ENCODE measurements at regions of chr1 and their contacts with region 1.

Region 1: GRCh38 chr1:11907275-11908094 is 18.7 kb downstream of the KIAA2013 start:
- DNase-seq: peak; percentile 95
- ATAC-seq: peak; percentile 57
- H3K4me3 Mint-ChIP-seq: peak overlapping the region; percentile 81
- H3K27ac Mint-ChIP-seq: peak overlapping the region; percentile 99
- H3K4me1 Mint-ChIP-seq: peaks cover 37% of the 10 kb centered on the region
- H3K27me3 Mint-ChIP-seq: peaks cover 12% of the 10 kb centered on the region

Region 2: GRCh38 chr1:11059990-11060830 is 847.3 kb before region 1 on chr1 and contains the start of gene SRM:
- CTCF ChIA-PET with region 1: no interaction called
- POLR2A ChIA-PET with region 1: no interaction called
- intact Hi-C with region 1: loop called in 1 of 2 experiments (anchors 5 kb)
- DNase-seq: peak; percentile 95
- ATAC-seq: peak; percentile 98
- H3K4me3 Mint-ChIP-seq: peak within 1 kb of the TSS; percentile 93
- H3K27ac Mint-ChIP-seq: peak within 1 kb of the TSS; percentile 94
- H3K4me1 Mint-ChIP-seq: peaks cover 41% of the 10 kb centered on the region
- H3K27me3 Mint-ChIP-seq: no peaks in the 10 kb centered on the region
- total RNA-seq, gene SRM: 180 to 242 TPM

Region 3: DNA sequence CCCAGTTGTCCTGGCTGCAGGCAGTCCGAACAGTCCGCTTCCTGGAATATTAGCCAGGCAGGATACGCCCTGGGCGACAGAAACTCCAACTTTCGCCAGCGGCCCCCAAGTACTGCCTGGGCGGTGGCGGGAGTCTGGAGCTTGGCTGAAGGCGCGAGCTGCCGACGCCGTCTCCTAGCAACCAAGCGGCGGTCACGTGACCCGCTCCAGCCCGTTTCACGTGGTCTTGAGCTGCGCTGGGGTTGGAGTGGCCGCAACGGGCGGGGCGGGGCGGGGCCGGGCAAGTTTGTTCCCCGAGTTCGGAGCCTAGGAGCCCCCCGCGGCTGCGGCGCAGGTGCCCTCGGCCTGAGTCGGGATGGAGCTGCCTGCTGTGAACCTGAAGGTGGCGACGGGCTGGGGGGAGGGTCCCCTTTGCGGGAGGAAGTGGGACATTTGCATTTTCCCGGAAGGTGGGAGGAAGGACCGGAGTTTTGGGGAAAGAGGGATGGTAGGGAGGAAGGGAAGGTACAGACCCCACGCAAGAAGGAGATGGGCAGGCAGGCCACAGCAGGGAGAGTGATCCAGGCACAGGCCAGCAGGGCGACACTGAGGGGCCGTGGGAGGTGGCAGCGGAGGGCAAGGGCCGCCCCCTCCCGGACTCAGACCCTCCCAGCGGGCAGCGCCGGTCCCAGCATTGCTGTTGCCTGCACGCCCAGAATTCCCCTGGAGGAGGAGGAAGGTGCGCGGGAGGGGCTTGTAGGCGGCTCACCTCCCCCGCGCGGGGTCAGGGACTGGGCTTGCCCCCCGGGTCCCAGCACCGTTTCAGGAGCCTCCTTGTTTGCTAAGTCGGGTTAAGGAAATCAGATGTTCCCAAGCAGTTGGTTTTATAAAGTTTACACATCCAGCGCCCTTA is 171.4 kb before region 1 on chr1 and contains the start of gene AGTRAP:
- CTCF ChIA-PET with region 1: interaction called, 3 read pairs
- POLR2A ChIA-PET with region 1: interaction called, 18 read pairs
- intact Hi-C with region 1: loop called in 1 of 2 experiments (anchors 5 kb)
- DNase-seq: peak; percentile 95
- ATAC-seq: peak; percentile 81
- H3K4me3 Mint-ChIP-seq: peak within 1 kb of the TSS; percentile 87
- H3K27ac Mint-ChIP-seq: peak within 1 kb of the TSS; percentile 82
- H3K4me1 Mint-ChIP-seq: peaks cover 56% of the 10 kb centered on the region
- H3K27me3 Mint-ChIP-seq: no peaks in the 10 kb centered on the region
- total RNA-seq, gene AGTRAP: 13.2 to 13.3 TPM

Region 4: GRCh38 chr1:11918779-11919519 is 11.5 kb after region 1 on chr1:
- CTCF ChIA-PET with region 1: no interaction called
- POLR2A ChIA-PET with region 1: interaction called, 10 read pairs
- intact Hi-C with region 1: no loop called
- DNase-seq: no peak
- ATAC-seq: no peak
- H3K4me3 Mint-ChIP-seq: no peak overlapping the region
- H3K27ac Mint-ChIP-seq: no peak overlapping the region
- H3K4me1 Mint-ChIP-seq: peaks cover 26% of the 10 kb centered on the region
- H3K27me3 Mint-ChIP-seq: no peaks in the 10 kb centered on the region

Region 5: DNA sequence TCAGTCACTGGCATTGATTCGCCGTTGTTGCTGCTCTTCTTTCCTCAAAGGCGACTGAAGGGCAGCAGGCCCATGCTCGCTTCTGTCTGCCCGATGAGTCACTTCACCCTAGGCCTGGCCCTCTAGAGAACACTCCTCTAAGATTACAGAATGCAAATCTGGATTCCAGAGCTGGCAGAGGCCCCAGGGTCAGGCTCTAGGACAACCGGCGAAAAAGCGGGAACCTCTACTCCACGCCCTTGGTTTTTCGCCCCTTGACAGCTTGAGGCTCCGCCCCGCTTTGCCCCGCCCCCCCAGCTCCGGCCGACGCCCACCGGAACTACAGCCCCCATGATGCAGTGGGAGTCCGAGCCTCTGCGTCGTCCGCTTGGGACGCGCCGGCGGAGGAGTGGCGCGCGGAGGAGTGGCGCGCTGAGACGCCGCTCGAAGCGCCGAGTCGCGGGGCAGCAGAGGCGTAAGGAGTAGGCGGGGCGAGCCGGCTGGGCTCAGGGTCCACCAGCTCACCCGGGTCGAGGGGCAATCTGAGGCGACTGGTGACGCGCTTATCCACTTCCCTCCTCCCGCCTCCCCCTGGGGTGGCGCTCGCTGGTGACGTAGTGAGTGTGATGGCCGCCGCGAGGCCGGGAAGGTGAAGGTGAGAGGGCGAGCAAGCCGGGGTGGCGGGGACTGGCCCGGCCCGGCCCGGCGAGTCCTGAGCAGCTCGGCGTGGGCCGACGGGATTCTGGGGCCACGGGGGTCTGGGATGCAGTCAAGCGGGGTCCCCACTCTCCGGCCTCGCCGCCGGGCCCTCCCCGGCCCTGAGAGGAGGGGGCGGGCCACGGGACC is 72.6 kb after region 1 on chr1 and contains the start of gene MFN2:
- CTCF ChIA-PET with region 1: no interaction called
- POLR2A ChIA-PET with region 1: interaction called, 63 read pairs
- intact Hi-C with region 1: loop called (anchors 1 kb)
- DNase-seq: peak; percentile 96
- ATAC-seq: peak; percentile 93
- H3K4me3 Mint-ChIP-seq: peak within 1 kb of the TSS; percentile 97
- H3K27ac Mint-ChIP-seq: peak within 1 kb of the TSS; percentile 94
- H3K4me1 Mint-ChIP-seq: peaks cover 36% of the 10 kb centered on the region
- H3K27me3 Mint-ChIP-seq: no peaks in the 10 kb centered on the region
- total RNA-seq, gene MFN2: 52.5 to 71.6 TPM

Region 6: GRCh38 chr1:12067900-12068821 is 160.7 kb after region 1 on chr1:
- CTCF ChIA-PET with region 1: interaction called, 3 read pairs
- POLR2A ChIA-PET with region 1: interaction called, 18 read pairs
- intact Hi-C with region 1: loop called in 1 of 2 experiments (anchors 5 kb)
- DNase-seq: peak; percentile 87
- ATAC-seq: peak; percentile 80
- H3K4me3 Mint-ChIP-seq: peak overlapping the region; percentile 62
- H3K27ac Mint-ChIP-seq: peak overlapping the region; percentile 95
- H3K4me1 Mint-ChIP-seq: peaks cover 57% of the 10 kb centered on the region
- H3K27me3 Mint-ChIP-seq: peaks cover 35% of the 10 kb centered on the region

Region 7: GRCh38 chr1:12130466-12131130 is 223.1 kb after region 1 on chr1:
- CTCF ChIA-PET with region 1: no interaction called
- POLR2A ChIA-PET with region 1: no interaction called
- intact Hi-C with region 1: no loop called
- DNase-seq: no peak
- ATAC-seq: no peak
- H3K4me3 Mint-ChIP-seq: no peak overlapping the region
- H3K27ac Mint-ChIP-seq: no peak overlapping the region
- H3K4me1 Mint-ChIP-seq: peaks cover 56% of the 10 kb centered on the region
- H3K27me3 Mint-ChIP-seq: no peaks in the 10 kb centered on the region